Natural killer cell (primary cell): ENCODE measurements at regions of chr11 and their contacts with region 1.

Region 1: DNA sequence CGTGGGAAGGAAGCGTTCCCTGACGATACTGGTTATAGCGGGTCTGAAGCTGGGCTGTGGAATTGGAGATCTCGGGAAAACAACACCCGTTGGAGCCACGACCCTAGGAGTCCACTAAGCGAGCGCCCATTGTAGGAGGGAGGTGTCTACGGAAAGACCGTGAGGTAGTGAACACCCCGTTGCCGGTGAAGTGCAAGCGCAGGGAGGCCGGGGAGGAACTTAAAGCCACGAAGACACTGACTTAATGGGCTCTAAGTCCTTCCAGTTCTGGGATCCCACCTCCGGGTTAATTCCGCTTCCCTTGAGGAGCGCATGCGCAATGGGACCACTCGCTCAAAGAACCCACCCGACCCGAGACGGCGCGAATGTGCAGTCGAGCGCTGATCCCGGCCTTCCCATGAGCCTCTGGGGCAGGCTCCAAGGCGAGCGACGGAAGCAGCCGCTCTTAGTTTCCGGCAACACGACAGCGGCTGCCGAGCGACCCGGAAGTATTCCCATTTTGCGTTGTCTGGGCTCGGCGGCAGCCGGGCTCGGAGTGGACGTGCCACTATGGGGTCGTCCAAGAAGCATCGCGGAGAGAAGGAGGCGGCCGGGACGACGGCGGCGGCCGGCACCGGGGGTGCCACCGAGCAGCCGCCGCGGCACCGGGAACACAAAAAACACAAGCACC is at the start of gene SART1:
- DNase-seq: peak; percentile 90 to 99
- ATAC-seq: peak; percentile 93 to 97 (median 95)
- H3K4me3 ChIP-seq: peak within 1 kb of the TSS; percentile 75
- H3K4me3 Mint-ChIP-seq: peak within 1 kb of the TSS; percentile 99
- H3K27ac ChIP-seq: peak within 1 kb of the TSS; percentile 93
- H3K27ac Mint-ChIP-seq: peak within 1 kb of the TSS; percentile 96 to 98
- H3K4me1 ChIP-seq: peaks cover 41% of the 10 kb centered on the region
- H3K4me1 Mint-ChIP-seq: peaks cover 24 to 40% of the 10 kb centered on the region in 2 donors
- H3K27me3 ChIP-seq: no peaks in the 10 kb centered on the region
- H3K27me3 Mint-ChIP-seq: no peaks in the 10 kb centered on the region
- CTCF ChIP-seq: no peak
- total RNA-seq, gene SART1: 103 to 123 (median 115) TPM

Region 2: DNA sequence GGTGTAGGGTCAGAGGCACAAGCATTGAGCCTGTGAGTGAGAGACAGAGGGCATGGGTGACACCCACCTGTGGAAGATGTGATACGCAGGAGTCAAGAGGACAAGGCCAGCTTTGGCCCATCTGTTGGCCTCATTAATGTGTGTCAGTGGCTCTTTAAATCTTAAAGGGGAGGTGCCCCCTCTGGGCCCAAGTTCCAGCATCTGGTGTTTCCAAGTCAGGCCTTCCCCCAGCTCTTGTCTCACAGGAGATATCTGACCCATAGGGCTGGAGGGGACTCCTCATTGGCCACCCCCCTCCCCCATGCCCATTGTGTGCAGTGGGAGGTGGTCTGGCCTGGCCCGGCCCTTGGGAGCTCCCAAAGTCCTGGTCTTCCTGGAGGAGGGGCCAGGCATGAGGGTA is 374.7 kb before region 1 on chr11:
- intact Hi-C with region 1: no loop called
- DNase-seq: no peak
- ATAC-seq: no peak
- H3K4me3 ChIP-seq: no peak overlapping the region
- H3K4me3 Mint-ChIP-seq: no peak overlapping the region
- H3K27ac ChIP-seq: no peak overlapping the region
- H3K27ac Mint-ChIP-seq: peak overlapping the region; percentile 52 to 60
- H3K4me1 ChIP-seq: peaks cover 40% of the 10 kb centered on the region
- H3K4me1 Mint-ChIP-seq: peaks cover 29 to 54% of the 10 kb centered on the region in 2 donors
- H3K27me3 ChIP-seq: no peaks in the 10 kb centered on the region
- H3K27me3 Mint-ChIP-seq: no peaks in the 10 kb centered on the region
- CTCF ChIP-seq: no peak

Region 3: GRCh38 chr11:65859200-65859811 is 102.1 kb before region 1 on chr11:
- intact Hi-C with region 1: loop called (anchors 1 kb)
- DNase-seq: peak; percentile 94 to 96
- ATAC-seq: peak; percentile 65 to 82 (median 66)
- H3K4me3 ChIP-seq: peak overlapping the region; percentile 80
- H3K4me3 Mint-ChIP-seq: peak overlapping the region; percentile 98
- H3K27ac ChIP-seq: peak overlapping the region; percentile 85
- H3K27ac Mint-ChIP-seq: peak overlapping the region; percentile 97 to 98
- H3K4me1 ChIP-seq: peaks cover 51% of the 10 kb centered on the region
- H3K4me1 Mint-ChIP-seq: peaks cover 51 to 64% of the 10 kb centered on the region in 2 donors
- H3K27me3 ChIP-seq: no peaks in the 10 kb centered on the region
- H3K27me3 Mint-ChIP-seq: no peaks in the 10 kb centered on the region
- CTCF ChIP-seq: no peak

Region 4: DNA sequence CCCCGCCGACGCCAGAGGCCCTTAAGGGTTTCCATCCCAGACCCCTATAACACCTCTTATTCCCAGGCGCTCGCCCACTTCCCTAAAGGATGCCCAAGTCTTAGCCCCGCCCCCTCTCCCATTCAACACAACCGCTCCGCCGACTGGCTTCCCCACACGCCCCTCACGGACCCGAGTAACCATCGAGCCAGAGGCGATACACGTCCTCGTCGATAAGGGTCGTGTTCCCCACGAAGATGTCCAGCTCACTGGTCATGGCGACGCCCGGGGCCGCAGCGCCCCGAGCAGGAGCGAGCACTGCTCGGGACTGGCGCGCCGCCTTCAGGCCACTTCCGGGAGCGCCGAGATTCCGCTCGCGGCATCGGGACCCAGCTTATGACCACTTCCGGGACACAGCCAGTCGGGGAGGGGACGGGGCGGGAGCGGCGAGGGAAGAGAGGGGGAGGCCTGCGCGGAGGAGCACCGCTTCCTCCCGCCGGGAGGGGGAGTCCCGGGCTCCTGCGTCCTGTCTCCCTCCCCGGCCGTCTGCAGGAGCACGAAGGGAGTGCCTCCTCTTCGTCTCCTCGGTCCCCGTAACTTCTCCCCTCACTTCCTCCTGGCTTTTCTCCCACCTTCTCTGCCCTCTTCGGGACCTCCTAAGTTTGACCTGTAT is 73.1 kb before region 1 on chr11 and contains the start of gene FIBP:
- intact Hi-C with region 1: loop called (anchors 5 kb)
- DNase-seq: peak; percentile 88 to 97
- ATAC-seq: peak; percentile 60 to 79 (median 64)
- H3K4me3 ChIP-seq: peak within 1 kb of the TSS; percentile 72
- H3K4me3 Mint-ChIP-seq: peak within 1 kb of the TSS; percentile 88
- H3K27ac ChIP-seq: peak within 1 kb of the TSS; percentile 97
- H3K27ac Mint-ChIP-seq: peak within 1 kb of the TSS; percentile 88 to 96
- H3K4me1 ChIP-seq: peaks cover 72% of the 10 kb centered on the region
- H3K4me1 Mint-ChIP-seq: peaks cover 60 to 68% of the 10 kb centered on the region in 2 donors
- H3K27me3 ChIP-seq: no peaks in the 10 kb centered on the region
- H3K27me3 Mint-ChIP-seq: no peaks in the 10 kb centered on the region
- CTCF ChIP-seq: peak; percentile 90
- total RNA-seq, gene FIBP: 36.5 to 47.9 (median 45.7) TPM

Region 5: DNA sequence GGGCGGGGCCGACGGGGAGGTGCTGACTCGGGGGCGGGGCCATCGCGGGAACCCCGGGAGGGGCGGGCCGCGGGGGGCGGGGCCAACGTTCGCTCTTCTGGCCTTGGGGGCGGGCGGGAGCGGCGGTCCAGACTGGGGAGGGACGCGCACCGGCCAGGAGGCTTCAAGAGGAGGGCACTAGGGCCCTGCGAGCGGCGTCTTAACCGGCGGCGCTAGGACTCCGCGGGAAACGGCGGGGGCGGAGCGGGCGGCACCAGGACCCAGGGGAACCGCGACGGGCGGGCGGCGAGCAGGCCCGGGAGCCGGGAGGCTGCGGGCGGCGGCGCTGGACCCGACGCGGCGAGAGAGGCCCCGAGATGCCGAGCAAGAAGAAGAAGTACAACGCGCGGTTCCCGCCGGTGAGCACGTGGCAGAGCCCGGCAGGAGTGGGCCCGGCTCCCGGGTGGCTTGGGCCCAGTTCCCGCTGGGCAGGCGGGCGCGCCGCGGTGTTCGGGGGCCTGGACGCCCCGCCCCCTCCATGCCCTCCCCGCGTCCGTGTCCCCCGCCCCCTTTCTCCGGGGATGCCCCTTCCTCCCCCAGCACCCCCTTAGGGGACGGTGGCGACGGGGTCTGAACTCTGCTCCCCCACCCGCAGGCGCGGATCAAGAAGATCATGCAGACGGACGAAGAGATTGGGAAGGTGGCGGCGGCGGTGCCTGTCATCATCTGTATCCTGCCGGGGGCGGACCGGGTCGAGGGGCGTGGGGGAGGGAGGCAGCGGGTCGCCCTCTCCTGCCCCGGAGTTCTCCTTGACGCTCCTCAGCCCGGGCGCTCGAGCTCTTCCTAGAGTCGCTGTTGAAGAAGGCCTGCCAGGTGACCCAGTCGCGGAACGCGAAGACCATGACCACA is 42.0 kb before region 1 on chr11 and contains the start of gene DRAP1:
- intact Hi-C with region 1: loop called (anchors 1 kb)
- DNase-seq: peak; percentile 97 to 98
- ATAC-seq: peak; percentile 88 to 97 (median 90)
- H3K4me3 ChIP-seq: peak within 1 kb of the TSS; percentile 96
- H3K4me3 Mint-ChIP-seq: peak within 1 kb of the TSS; percentile 90
- H3K27ac ChIP-seq: peak within 1 kb of the TSS; percentile 79
- H3K27ac Mint-ChIP-seq: peak within 1 kb of the TSS; percentile 77 to 90
- H3K4me1 ChIP-seq: peaks cover 57% of the 10 kb centered on the region
- H3K4me1 Mint-ChIP-seq: peaks cover 24 to 52% of the 10 kb centered on the region in 2 donors
- H3K27me3 ChIP-seq: no peaks in the 10 kb centered on the region
- H3K27me3 Mint-ChIP-seq: no peaks in the 10 kb centered on the region
- CTCF ChIP-seq: no peak
- total RNA-seq, gene DRAP1: 114 to 115 (median 115) TPM

Region 6: DNA sequence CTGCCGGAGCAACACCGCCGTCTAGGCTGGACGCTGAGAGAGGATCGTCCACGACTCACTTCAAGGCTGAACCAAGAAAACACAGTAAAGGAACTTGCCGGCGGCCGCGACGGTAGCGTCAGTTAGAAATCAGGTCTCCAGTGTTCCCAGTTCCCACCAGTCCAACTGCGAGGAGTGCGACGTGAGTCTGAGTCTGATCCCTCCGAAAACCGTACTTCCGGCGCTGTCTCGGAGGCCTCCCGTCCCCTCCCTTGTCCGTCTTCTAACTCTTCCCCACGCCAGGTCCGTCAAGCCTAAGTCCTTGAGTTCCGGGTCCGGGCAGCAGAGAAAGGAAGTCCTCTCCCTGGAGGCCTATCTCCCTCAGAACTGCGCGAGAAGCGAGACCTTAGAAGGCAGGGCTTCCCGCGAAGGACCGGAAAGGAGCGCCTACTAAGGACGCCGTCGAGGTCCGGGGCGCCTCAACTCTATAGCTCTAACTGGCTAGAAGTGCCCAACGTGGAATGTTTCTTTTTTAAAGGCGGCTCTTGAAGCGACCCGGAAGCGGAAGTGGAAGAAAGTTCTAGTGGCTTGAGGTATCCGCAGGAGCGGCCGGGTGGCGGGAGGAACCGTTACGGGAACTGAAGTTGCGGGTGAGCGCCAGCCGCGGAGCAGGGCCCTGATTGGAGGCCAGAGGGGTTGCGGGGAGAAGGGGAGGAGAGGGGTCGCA is 40.7 kb after region 1 on chr11 and contains the starts of genes BANF1 and EIF1AD:
- intact Hi-C with region 1: loop called (anchors 1 kb)
- DNase-seq: peak; percentile 90 to 98
- ATAC-seq: peak; percentile 84 to 92 (median 85)
- H3K4me3 ChIP-seq: peak within 1 kb of the TSS; percentile 54
- H3K4me3 Mint-ChIP-seq: peak within 1 kb of the TSS; percentile 99
- H3K27ac ChIP-seq: peak within 1 kb of the TSS; percentile 77
- H3K27ac Mint-ChIP-seq: peak within 1 kb of the TSS; percentile 99
- H3K4me1 ChIP-seq: peaks cover 24% of the 10 kb centered on the region
- H3K4me1 Mint-ChIP-seq: peaks cover 22 to 41% of the 10 kb centered on the region in 2 donors
- H3K27me3 ChIP-seq: no peaks in the 10 kb centered on the region
- H3K27me3 Mint-ChIP-seq: no peaks in the 10 kb centered on the region
- CTCF ChIP-seq: no peak
- total RNA-seq, gene BANF1: 87.8 to 107 (median 90.4) TPM
- total RNA-seq, gene EIF1AD: 49.9 to 74.2 (median 62.8) TPM

Region 7: GRCh38 chr11:66022401-66023185 is 61.2 kb after region 1 on chr11:
- intact Hi-C with region 1: no loop called
- DNase-seq: peak; percentile 84 to 85
- ATAC-seq: peak; percentile 82 to 85 (median 83)
- H3K4me3 ChIP-seq: no peak overlapping the region
- H3K4me3 Mint-ChIP-seq: peak overlapping the region; percentile 82
- H3K27ac ChIP-seq: no peak overlapping the region
- H3K27ac Mint-ChIP-seq: peak overlapping the region in 1 of 2 donors; percentile 91
- H3K4me1 ChIP-seq: peaks cover 31% of the 10 kb centered on the region
- H3K4me1 Mint-ChIP-seq: peaks cover 30 to 32% of the 10 kb centered on the region in 2 donors
- H3K27me3 ChIP-seq: no peaks in the 10 kb centered on the region
- H3K27me3 Mint-ChIP-seq: peaks cover 4 to 5% of the 10 kb centered on the region in 2 donors
- CTCF ChIP-seq: peak; percentile 98